ENCODE measurements at regions of chr20 and their contacts with region 1.

Region 1: GRCh38 chr20:44187051-44187762 is at the start of gene JPH2:
- DNase-seq: peak in 1 of 3 donors; percentile 50
- ATAC-seq: peak; percentile 15 to 45 (median 24)
- H3K4me3 ChIP-seq: peak within 1 kb of the TSS in 1 of 3 donors; percentile 14
- H3K27ac ChIP-seq: no peak within 1 kb of the TSS
- H3K4me1 ChIP-seq: no peaks in the 10 kb centered on the region
- H3K27me3 ChIP-seq: no peaks in the 10 kb centered on the region
- CTCF ChIP-seq: no peak
- POLR2A ChIP-seq: no peak
- total RNA-seq, gene JPH2: 0.09 to 0.31 (median 0.10) TPM in 5 of 6 experiments, not detected in the other

Region 2: GRCh38 chr20:44115762-44116644 is 71.2 kb before region 1 on chr20:
- intact Hi-C with region 1: loop called (anchors 5 kb)
- DNase-seq: no peak
- ATAC-seq: no peak
- H3K4me3 ChIP-seq: no peak overlapping the region
- H3K27ac ChIP-seq: no peak overlapping the region
- H3K4me1 ChIP-seq: no peaks in the 10 kb centered on the region
- H3K27me3 ChIP-seq: peaks cover 0 to 8% of the 10 kb centered on the region in 2 donors
- CTCF ChIP-seq: no peak
- POLR2A ChIP-seq: no peak